HepG2 (cell line): ENCODE measurements at regions of chr2 and their contacts with region 1.

Region 1: GRCh38 chr2:234881413-234882241 is 70.2 kb upstream of the SH3BP4 start:
- DNase-seq: peak; percentile 98
- ATAC-seq: peak; percentile 96
- H3K4me3 ChIP-seq: peak overlapping the region; percentile 4 to 64 (median 38); a peak in 3 of 6 replicates
- H3K27ac ChIP-seq: peak overlapping the region; percentile 84
- H3K4me1 ChIP-seq: peaks cover 68% of the 10 kb centered on the region
- H3K27me3 ChIP-seq: no peaks in the 10 kb centered on the region
- CTCF ChIP-seq: peak; percentile 97
- EP300 ChIP-seq: peak in 1 of 2 experiments; percentile 58; a peak in 2 of 4 replicates
- POLR2A ChIP-seq: peak; percentile 54 to 58; a peak in 3 of 4 replicates
- RAD21 ChIP-seq: peak; percentile 92

Region 2: GRCh38 chr2:234679741-234680687 is 201.6 kb before region 1 on chr2:
- CTCF ChIA-PET with region 1: no interaction called
- POLR2A ChIA-PET with region 1: interaction called, 71 read pairs
- in situ Hi-C with region 1: no loop called
- intact Hi-C with region 1: loop called (anchors 5 kb)
- DNase-seq: peak; percentile 98
- ATAC-seq: peak; percentile 93
- H3K4me3 ChIP-seq: peak overlapping the region in 1 of 3 experiments; percentile 5; a peak in 1 of 6 replicates
- H3K27ac ChIP-seq: peak overlapping the region; percentile 86
- H3K4me1 ChIP-seq: peaks cover 97% of the 10 kb centered on the region
- H3K27me3 ChIP-seq: no peaks in the 10 kb centered on the region
- CTCF ChIP-seq: no peak
- EP300 ChIP-seq: peak; percentile 38 to 97; a peak in 3 of 4 replicates
- POLR2A ChIP-seq: no peak
- RAD21 ChIP-seq: peak; percentile 61; the same call in 1 of the 2 replicates

Region 3: DNA sequence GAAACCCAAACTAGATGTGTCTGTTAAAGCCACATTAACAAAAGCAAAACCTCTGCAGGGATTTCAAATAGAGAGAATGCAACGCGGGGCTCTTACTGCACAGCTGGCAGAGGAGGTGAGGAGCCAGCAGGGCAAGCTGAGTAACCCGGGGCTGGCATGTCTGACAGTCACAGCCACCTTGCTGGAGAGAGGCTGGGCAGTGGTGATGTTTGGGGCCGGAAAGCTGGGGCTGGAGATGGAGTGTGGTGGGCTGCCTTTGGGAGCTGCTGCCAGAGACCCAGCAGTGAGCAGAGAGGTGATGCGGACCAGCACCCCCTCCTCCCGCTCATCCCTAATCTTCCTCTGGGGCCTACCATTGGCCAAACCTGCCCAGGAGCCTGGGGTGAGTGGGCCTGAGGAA is 180.2 kb before region 1 on chr2:
- CTCF ChIA-PET with region 1: no interaction called
- POLR2A ChIA-PET with region 1: no interaction called
- in situ Hi-C with region 1: no loop called
- intact Hi-C with region 1: no loop called
- DNase-seq: no peak
- ATAC-seq: no peak
- H3K4me3 ChIP-seq: no peak overlapping the region
- H3K27ac ChIP-seq: no peak overlapping the region
- H3K4me1 ChIP-seq: peaks cover 18% of the 10 kb centered on the region
- H3K27me3 ChIP-seq: no peaks in the 10 kb centered on the region
- CTCF ChIP-seq: no peak
- EP300 ChIP-seq: no peak
- POLR2A ChIP-seq: no peak
- RAD21 ChIP-seq: no peak

Region 4: DNA sequence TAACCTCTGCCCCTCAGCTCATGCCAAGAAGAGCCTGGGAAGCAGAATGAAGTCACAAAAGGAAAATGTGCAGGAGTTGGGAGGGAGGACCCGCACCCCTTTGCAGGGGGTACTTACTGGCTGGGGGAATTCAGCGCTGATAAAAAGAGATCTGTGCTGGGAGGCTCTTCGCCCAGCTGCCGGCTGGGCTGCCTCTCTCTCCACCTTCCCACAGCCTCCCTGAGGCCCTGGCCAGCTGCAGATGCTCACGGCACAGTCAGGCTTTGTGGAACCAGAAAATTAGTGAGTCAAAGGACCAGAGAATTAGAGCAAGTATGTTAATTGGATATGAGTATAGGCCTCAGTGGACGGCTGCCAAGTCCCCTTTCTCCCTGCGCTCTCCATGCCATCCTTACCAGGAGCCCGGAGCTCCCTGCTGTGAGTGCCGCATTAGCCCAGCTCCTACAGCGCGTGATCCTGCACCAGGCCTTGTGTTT is 111.6 kb before region 1 on chr2:
- CTCF ChIA-PET with region 1: no interaction called
- POLR2A ChIA-PET with region 1: interaction called, 12 read pairs
- in situ Hi-C with region 1: no loop called
- intact Hi-C with region 1: no loop called
- DNase-seq: no peak
- ATAC-seq: peak; percentile 47
- H3K4me3 ChIP-seq: no peak overlapping the region
- H3K27ac ChIP-seq: no peak overlapping the region
- H3K4me1 ChIP-seq: peaks cover 88% of the 10 kb centered on the region
- H3K27me3 ChIP-seq: no peaks in the 10 kb centered on the region
- CTCF ChIP-seq: no peak
- EP300 ChIP-seq: no peak
- POLR2A ChIP-seq: no peak
- RAD21 ChIP-seq: no peak

Region 5: GRCh38 chr2:234846599-234847363 is 34.8 kb before region 1 on chr2:
- CTCF ChIA-PET with region 1: no interaction called
- POLR2A ChIA-PET with region 1: interaction called, 24 read pairs
- in situ Hi-C with region 1: no loop called
- intact Hi-C with region 1: loop called (anchors 1 kb)
- DNase-seq: no peak
- ATAC-seq: peak; percentile 14; the same call in 2 of the 3 replicates
- H3K4me3 ChIP-seq: no peak overlapping the region
- H3K27ac ChIP-seq: peak overlapping the region; percentile 77
- H3K4me1 ChIP-seq: peaks cover 96% of the 10 kb centered on the region
- H3K27me3 ChIP-seq: no peaks in the 10 kb centered on the region
- CTCF ChIP-seq: no peak
- EP300 ChIP-seq: no peak
- POLR2A ChIP-seq: no peak
- RAD21 ChIP-seq: no peak

Region 6: DNA sequence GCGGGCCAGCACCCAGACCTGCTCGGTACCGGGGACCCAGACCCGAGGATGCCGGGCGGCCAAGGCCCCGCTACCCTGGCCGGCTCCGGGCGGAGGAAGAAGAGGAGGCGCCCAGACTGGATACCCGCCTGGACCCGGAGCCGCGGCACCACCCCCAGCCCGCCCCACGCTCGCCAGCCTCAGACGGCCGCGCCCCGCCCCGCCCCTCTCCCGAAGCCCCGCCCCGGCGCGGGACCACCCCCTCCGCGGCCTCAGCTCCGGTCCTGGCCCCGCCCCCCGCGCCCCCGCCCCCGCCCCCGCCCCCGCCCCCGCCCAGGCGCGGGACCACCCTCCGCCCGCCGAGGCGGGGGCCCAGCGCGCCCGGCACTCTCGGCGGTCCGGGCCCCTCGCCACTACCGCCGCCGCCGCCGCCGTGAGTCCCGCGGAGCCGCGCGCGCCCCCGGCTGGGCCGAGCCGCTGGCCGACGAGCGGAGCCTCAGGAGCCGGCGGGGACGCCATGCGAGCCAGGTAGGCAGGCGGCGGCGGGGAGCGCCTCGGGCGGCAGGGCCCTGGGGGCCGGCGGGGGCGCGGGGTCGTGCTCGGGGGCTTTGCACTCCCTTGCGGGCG is 70.1 kb after region 1 on chr2 and contains the start of gene SH3BP4:
- CTCF ChIA-PET with region 1: no interaction called
- POLR2A ChIA-PET with region 1: interaction called, 20 read pairs
- in situ Hi-C with region 1: no loop called
- intact Hi-C with region 1: loop called (anchors 2 kb)
- DNase-seq: peak; percentile 54
- ATAC-seq: peak; percentile 79
- H3K4me3 ChIP-seq: peak within 1 kb of the TSS; percentile 74 to 93 (median 76)
- H3K27ac ChIP-seq: peak within 1 kb of the TSS; percentile 56
- H3K4me1 ChIP-seq: peaks cover 57% of the 10 kb centered on the region
- H3K27me3 ChIP-seq: no peaks in the 10 kb centered on the region; a peak in 2 of 5 replicates
- CTCF ChIP-seq: no peak
- EP300 ChIP-seq: no peak
- POLR2A ChIP-seq: peak in 1 of 2 experiments; percentile 50; a peak in 2 of 4 replicates
- RAD21 ChIP-seq: peak; percentile 58; the same call in 1 of the 2 replicates
- total RNA-seq, gene SH3BP4: 34.6 and 44.3 TPM in 2 replicates

Region 7: DNA sequence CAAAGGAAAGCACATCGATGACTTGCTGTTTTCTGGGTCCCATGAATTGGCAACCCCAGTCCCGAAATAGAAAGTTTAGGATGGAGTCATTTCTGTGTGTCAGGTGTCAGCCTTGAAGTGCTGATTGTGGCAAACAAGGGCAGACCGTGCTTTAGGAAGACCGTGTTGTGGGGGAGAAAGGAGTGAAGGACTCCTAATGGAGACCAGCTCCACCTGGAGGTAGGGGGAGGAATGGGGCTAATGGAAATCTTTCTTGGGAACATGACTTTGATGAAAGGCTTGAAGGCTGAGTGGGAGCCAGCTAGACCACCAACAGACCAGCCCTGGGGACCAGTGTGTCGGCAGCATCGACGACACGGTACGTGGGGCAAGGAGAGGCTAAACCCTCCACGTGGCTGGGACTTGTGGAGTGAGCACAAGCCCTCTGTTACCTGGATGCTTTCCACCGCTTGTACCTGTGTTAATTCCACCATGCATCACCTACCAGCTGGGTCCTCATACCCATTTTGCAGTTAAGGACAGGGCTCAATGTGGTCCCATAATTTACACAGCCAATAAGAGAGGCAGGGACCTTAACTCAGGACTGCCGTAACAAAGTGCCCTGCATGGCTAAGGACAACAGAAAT is 174.4 kb after region 1 on chr2:
- CTCF ChIA-PET with region 1: interaction called, 6 read pairs
- POLR2A ChIA-PET with region 1: no interaction called
- in situ Hi-C with region 1: no loop called
- intact Hi-C with region 1: loop called (anchors 1 kb)
- DNase-seq: peak; percentile 78
- ATAC-seq: peak; percentile 67
- H3K4me3 ChIP-seq: no peak overlapping the region
- H3K27ac ChIP-seq: no peak overlapping the region
- H3K4me1 ChIP-seq: no peaks in the 10 kb centered on the region
- H3K27me3 ChIP-seq: no peaks in the 10 kb centered on the region
- CTCF ChIP-seq: peak; percentile 91
- EP300 ChIP-seq: no peak; a peak in 1 of 4 replicates
- POLR2A ChIP-seq: peak; percentile 36 to 65; a peak in 2 of 4 replicates
- RAD21 ChIP-seq: peak; percentile 78